ENCODE measurements at regions of chr17 and their contacts with region 1.

Region 1: GRCh38 chr17:48259694-48260291 is 152.2 kb downstream of the SNX11 start:
- DNase-seq: no peak
- H3K4me3 Mint-ChIP-seq: no peak overlapping the region
- H3K27ac Mint-ChIP-seq: no peak overlapping the region
- H3K4me1 Mint-ChIP-seq: peaks cover 6% of the 10 kb centered on the region
- H3K27me3 Mint-ChIP-seq: no peaks in the 10 kb centered on the region

Region 2: GRCh38 chr17:48244121-48244711 is 15.6 kb before region 1 on chr17:
- intact Hi-C with region 1: no loop called
- DNase-seq: no peak
- H3K4me3 Mint-ChIP-seq: no peak overlapping the region
- H3K27ac Mint-ChIP-seq: no peak overlapping the region
- H3K4me1 Mint-ChIP-seq: peaks cover 46% of the 10 kb centered on the region
- H3K27me3 Mint-ChIP-seq: no peaks in the 10 kb centered on the region

Region 3: DNA sequence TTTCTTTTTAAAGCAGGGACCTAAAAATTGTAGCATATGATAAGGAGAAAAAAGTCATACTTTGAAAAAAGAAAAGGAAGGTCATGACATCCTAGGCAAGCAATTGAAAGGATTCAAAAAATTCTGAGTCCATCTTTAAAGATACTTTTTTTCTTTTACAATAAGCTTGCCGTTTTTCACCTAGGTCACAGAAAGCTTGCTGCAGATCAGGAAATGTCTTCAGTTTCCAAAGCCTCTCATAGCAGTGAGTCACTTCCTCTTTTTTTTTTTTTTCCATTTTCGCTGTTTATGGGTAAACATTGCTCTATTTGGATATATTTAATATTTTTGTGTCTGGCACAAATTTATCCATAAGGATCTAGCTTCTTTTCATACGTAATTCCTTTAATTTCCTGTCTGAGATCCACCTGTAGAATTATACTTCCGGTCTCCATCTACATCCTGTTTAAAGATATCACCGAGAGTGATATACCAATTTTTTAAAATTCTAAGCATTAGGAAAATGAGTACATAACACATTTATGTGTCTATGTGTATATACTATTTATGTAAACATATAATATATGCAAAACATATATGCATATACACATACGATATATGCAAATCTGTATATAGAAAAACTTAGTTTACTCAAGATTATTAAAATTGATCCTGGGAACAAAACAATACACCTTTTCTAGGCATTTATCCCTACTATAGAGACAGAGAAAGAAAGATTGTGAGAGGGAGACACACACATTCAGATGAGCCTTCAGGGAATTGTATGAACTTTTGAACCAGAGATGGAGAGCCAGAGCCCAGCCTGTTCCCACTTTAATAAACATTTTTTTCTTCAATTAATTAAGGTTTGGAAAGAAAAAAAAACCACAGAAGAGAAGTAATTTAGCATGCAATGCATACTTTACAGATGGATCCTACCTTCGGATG is 35.8 kb after region 1 on chr17:
- intact Hi-C with region 1: loop called (anchors 5 kb)
- DNase-seq: no peak
- H3K4me3 Mint-ChIP-seq: peak overlapping the region; percentile 78
- H3K27ac Mint-ChIP-seq: peak overlapping the region; percentile 92
- H3K4me1 Mint-ChIP-seq: peaks cover 64% of the 10 kb centered on the region
- H3K27me3 Mint-ChIP-seq: no peaks in the 10 kb centered on the region